ENCODE measurements at regions of chr6 and their contacts with region 1.

Region 1: DNA sequence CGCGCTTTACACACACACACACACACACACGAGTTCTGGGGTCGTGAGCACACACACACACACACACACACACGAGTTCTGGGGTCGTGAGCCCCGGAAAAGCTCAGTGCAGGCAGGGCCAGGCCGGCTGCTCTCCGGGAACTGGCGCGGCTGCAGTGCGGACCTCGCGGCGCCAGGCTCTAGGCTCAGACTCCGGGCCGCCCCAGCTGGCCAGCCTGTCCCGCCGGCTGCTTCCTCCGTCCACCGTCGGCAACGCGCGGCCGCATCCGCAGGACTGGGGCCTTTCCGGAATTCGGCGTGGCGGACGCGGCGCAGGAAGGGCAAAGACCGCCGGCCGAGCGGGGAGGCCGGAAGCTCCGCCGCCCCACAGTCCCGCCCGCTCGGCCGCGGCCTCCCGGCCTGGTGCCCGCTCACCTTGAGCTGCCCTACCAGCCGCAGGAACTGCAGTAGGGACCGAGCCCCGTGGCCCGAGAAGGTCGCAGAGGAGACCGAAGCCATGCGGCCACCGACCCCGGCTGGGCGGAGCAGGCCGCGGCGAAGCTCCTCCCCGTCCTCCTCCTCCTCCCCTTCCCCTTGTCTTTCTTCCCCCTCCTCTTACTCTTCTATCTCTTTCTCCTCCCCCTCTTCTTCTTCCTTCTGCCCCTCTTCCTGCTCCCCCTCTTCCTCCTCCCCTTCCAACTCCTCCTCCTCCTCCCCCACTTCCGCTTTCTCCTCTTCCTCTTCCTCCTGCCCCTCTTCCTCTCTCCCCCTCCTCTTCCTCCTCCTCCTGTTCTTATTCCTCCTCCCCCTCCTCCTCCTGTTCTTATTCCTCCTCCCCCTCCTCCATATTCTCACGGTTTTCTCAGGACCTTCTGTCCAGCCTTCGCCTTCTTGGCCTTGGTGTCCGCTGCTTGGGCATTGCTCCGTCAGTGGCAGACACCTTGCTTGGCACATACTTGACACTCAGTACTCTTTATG is at the start of gene HDDC2:
- DNase-seq: peak; percentile 83
- H3K4me3 ChIP-seq: peak within 1 kb of the TSS; percentile 78
- H3K27ac ChIP-seq: peak within 1 kb of the TSS; percentile 94
- H3K4me1 ChIP-seq: peaks cover 43% of the 10 kb centered on the region
- H3K27me3 ChIP-seq: no peaks in the 10 kb centered on the region
- CTCF ChIP-seq: peak; percentile 8
- total RNA-seq, gene HDDC2: 87.9 TPM

Region 2: DNA sequence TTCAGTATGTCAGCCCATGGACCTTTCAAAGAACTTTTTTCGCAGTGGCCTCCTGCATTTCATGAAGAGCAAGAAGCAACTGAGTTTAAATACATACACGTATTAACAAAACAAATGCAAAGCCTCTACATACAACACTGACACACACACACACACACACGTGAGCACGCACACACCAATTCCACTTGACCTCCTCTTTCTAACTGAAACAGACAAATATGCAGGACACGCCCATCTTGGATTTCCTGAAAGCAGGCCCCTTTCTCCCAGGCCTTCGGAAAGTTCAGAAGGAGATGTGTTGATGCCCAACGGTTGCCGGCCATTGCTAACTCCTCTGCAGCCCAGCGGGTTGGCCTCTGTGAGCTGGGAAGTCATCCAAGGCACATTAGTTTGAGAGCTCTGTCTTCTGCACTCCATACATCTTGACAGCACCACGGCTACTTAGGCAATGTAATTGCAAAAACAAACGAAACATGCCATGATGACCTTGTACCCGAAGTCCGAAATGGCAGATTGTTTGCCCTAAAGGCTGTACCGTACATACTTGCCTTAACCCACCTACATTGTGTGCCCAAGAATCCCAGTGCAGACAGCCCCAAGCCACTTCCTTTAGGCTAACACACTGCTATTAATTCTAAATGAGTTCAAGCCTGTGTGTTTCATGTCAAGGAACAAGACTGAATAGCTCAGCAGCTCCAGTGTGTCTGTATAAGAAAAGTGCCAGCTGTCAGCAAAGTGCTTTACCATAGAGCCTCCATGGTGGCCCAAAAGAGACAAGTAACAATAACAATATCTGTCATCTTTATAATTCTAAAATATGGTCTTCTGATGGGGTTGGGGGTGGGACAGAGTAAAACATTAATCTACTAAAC is 478.2 kb before region 1 on chr6:
- intact Hi-C with region 1: no loop called
- DNase-seq: no peak
- H3K4me3 ChIP-seq: no peak overlapping the region
- H3K27ac ChIP-seq: no peak overlapping the region
- H3K4me1 ChIP-seq: no peaks in the 10 kb centered on the region
- H3K27me3 ChIP-seq: no peaks in the 10 kb centered on the region
- CTCF ChIP-seq: no peak

Region 3: GRCh38 chr6:125153391-125154117 is 148.2 kb before region 1 on chr6 and contains the start of gene TPD52L1:
- intact Hi-C with region 1: loop called (anchors 10 kb)
- DNase-seq: peak; percentile 81
- H3K4me3 ChIP-seq: peak within 1 kb of the TSS; percentile 82
- H3K27ac ChIP-seq: peak within 1 kb of the TSS; percentile 74
- H3K4me1 ChIP-seq: peaks cover 39% of the 10 kb centered on the region
- H3K27me3 ChIP-seq: no peaks in the 10 kb centered on the region
- CTCF ChIP-seq: peak; percentile 91
- total RNA-seq, gene TPD52L1: 64.0 TPM